ENCODE measurements at regions of chr18 and their contacts with region 1.

Region 1: DNA sequence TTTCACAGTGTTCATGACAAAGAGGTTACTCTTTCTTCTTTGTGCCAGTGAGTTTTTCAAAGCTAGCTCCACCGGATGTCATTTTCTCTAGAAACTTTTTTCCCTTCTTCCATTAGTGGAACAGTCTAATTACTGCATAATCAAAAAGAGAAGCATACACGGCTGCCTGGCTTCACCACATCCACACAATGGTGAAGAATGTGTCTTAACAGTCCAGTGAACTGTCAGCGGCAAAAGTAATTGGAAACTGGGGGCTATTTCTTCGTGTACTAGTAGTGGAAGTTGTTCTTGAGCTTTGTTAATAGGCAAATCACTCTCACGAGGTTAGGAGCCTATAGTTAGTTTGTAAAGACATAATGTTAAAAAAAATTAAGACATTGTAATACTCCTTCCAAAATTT is 32.9 kb upstream of the PIK3C3 start:
- DNase-seq: no peak
- ATAC-seq: no peak
- H3K4me3 ChIP-seq: no peak overlapping the region
- H3K27ac ChIP-seq: no peak overlapping the region
- H3K4me1 ChIP-seq: no peaks in the 10 kb centered on the region
- H3K27me3 ChIP-seq: no peaks in the 10 kb centered on the region
- CTCF ChIP-seq: no peak
- EP300 ChIP-seq: no peak
- POLR2A ChIP-seq: no peak
- RAD21 ChIP-seq: no peak

Region 2: DNA sequence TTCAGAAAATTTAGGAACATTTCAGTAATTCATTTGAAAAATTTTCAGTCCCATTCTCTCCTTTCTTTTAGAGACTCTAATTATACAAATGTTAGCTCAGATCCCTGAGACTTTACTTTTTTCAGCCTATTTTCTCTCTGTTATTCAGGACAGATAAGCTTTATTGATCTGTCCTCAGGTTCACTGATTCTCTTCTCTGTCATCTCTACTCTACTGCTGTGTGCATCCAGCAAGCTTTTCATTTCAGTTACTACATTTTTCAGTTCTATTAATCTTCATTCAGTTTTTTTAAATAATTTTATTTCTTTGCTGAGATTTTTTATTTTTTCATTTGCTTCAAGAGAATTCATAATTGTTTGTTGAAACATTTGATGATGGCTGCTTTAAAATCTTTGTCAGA is 10.7 kb after region 1 on chr18:
- CTCF ChIA-PET with region 1: interaction called, 5 read pairs
- POLR2A ChIA-PET with region 1: no interaction called
- RAD21 ChIA-PET with region 1: no interaction called
- SMC1A ChIA-PET with region 1: interaction called, 10 read pairs
- in situ Hi-C with region 1: no loop called
- intact Hi-C with region 1: no loop called
- DNase-seq: no peak
- ATAC-seq: no peak
- H3K4me3 ChIP-seq: no peak overlapping the region
- H3K27ac ChIP-seq: no peak overlapping the region
- H3K4me1 ChIP-seq: no peaks in the 10 kb centered on the region
- H3K27me3 ChIP-seq: no peaks in the 10 kb centered on the region
- CTCF ChIP-seq: no peak
- EP300 ChIP-seq: no peak
- POLR2A ChIP-seq: no peak
- RAD21 ChIP-seq: no peak

Measured in GM12878 (cell line).